Breast epithelium (tissue), 4 donors: ENCODE measurements at regions of chr6 and their contacts with region 1.

Region 1: GRCh38 chr6:80165143-80165542 is 58.7 kb downstream of the BCKDHB start:
- DNase-seq: no peak
- H3K4me3 ChIP-seq: no peak overlapping the region
- H3K27ac ChIP-seq: no peak overlapping the region
- H3K4me1 ChIP-seq: no peaks in the 10 kb centered on the region
- H3K27me3 ChIP-seq: no peaks in the 10 kb centered on the region
- CTCF ChIP-seq: no peak
- POLR2A ChIP-seq: no peak

Region 2: DNA sequence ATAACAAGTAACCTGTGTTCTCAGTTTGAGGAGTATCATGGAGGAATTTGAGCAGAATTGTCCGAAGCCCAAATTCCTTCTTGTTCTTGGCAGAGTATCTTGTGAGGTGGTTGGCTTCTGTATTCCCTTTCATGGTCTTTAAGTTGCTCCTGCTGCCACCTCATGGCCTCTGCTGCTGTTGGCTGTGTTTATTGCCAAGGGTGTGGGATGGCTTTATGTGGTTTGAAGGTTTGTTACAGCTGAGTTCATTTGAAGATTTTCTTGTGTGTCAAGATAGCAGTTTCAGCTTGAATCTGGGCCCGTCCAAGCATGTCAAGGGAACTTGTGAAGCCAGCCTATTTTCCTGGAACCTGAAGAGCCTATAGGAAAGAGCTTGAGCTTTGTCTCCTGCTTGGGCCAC is 180.9 kb before region 1 on chr6:
- intact Hi-C with region 1: loop called (anchors 5 kb)
- DNase-seq: no peak
- H3K4me3 ChIP-seq: no peak overlapping the region
- H3K27ac ChIP-seq: no peak overlapping the region
- H3K4me1 ChIP-seq: no peaks in the 10 kb centered on the region
- H3K27me3 ChIP-seq: no peaks in the 10 kb centered on the region
- CTCF ChIP-seq: no peak
- POLR2A ChIP-seq: no peak